ENCODE measurements at regions of chr2 and their contacts with region 1.

Region 1: GRCh38 chr2:221573430-221574230 is 1.5 kb upstream of the EPHA4 start:
- DNase-seq: no peak
- ATAC-seq: peak; percentile 74
- H3K4me3 ChIP-seq: peak overlapping the region; percentile 82
- H3K27ac ChIP-seq: no peak overlapping the region
- H3K4me1 ChIP-seq: peaks cover 14% of the 10 kb centered on the region
- H3K27me3 ChIP-seq: peaks cover 0 to 16% of the 10 kb centered on the region in 2 experiments; a peak in 3 of 4 replicates
- CTCF ChIP-seq: peak; percentile 88 to 97 (median 93); a peak in 5 of 6 replicates
- EP300 ChIP-seq: no peak
- POLR2A ChIP-seq: no peak
- RAD21 ChIP-seq: peak; percentile 91

Region 2: DNA sequence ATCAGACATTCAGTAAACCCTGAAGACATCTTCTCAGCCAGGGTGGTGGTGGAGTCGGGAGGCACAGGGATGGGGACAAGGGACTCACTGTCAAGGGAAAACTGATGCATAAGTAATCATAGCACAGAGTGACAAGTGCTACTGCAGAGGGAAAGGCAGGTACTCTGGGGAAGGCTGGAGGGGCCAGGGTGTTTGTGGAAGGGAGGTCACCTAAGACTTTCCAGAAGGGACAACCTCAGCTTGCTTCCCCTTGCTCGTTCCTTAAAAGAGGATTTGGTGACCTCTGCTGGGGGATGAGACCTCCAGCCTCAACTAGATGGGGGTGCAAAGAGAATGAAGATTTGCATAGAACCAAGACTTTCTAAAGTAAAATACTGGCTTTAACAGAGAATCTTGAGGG is 1846.7 kb before region 1 on chr2:
- CTCF ChIA-PET with region 1: no interaction called
- POLR2A ChIA-PET with region 1: no interaction called
- RAD21 ChIA-PET with region 1: no interaction called
- SMC1A ChIA-PET with region 1: no interaction called
- in situ Hi-C with region 1: loop called (anchors 10 kb)
- intact Hi-C with region 1: no loop called
- DNase-seq: no peak
- ATAC-seq: no peak
- H3K4me3 ChIP-seq: no peak overlapping the region
- H3K27ac ChIP-seq: no peak overlapping the region
- H3K4me1 ChIP-seq: no peaks in the 10 kb centered on the region
- H3K27me3 ChIP-seq: 0 out of 4 replicates have a peak, but pooled peaks cover 0 to 3% of the 10 kb centered on the region in 2 experiments
- CTCF ChIP-seq: no peak
- EP300 ChIP-seq: no peak
- POLR2A ChIP-seq: no peak
- RAD21 ChIP-seq: no peak

Region 3: DNA sequence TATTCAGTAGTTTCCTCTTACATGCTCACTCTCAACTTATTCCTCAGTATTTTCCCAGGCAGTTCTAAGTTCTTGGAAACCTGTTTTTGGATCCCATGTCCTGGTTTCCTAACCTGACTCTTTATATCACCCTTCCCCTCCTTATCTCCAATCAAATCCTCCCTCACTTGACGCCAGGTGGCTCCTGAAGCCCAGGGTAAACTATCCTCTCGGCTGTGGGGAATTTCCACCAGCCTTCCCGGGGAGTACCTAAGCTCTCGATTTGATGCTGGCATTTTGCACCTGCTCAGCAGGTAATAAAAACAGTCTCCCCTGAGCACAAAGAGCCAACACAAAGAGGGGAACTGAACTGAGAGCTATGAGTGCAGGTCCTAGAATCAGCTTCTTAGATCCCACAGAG is 1408.2 kb before region 1 on chr2:
- CTCF ChIA-PET with region 1: no interaction called
- POLR2A ChIA-PET with region 1: no interaction called
- RAD21 ChIA-PET with region 1: interaction called, 3 read pairs
- SMC1A ChIA-PET with region 1: no interaction called
- in situ Hi-C with region 1: no loop called
- intact Hi-C with region 1: loop called (anchors 10 kb)
- DNase-seq: no peak
- ATAC-seq: peak; percentile 33; the same call in 1 of the 3 replicates
- H3K4me3 ChIP-seq: no peak overlapping the region
- H3K27ac ChIP-seq: no peak overlapping the region
- H3K4me1 ChIP-seq: no peaks in the 10 kb centered on the region
- H3K27me3 ChIP-seq: no peaks in the 10 kb centered on the region
- CTCF ChIP-seq: peak in 1 of 3 experiments; percentile 25; a peak in 1 of 6 replicates
- EP300 ChIP-seq: no peak
- POLR2A ChIP-seq: no peak
- RAD21 ChIP-seq: peak; percentile 44

Region 4: DNA sequence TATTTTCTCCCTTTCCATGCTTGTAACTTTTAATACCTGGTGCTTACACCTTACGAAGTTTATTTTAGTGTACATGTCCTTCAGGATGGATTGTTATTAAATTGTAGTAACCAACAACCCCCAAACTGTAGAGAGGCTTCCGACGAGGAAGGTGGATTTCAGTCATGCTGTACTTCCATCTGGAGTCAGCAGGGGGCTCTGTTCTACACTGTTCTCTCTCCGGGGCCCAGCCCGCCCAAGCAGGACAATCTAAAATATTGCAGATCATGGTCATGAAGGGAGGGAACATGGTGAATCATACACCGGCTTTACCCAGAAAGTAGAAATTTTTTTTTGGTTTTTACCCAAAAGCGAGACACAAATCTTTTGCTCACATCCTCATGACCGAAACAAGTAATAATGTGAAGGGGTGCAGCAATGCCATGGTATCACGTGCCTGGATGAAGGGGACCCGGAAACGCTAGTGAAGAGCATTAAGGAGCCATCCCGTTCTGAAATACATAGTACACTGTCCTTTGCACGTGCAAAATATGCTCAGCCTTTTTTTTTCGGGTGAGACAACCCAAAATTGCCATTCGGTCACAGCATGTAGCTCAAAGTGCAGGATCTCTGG is 886.3 kb before region 1 on chr2:
- CTCF ChIA-PET with region 1: interaction called, 8 read pairs
- POLR2A ChIA-PET with region 1: no interaction called
- RAD21 ChIA-PET with region 1: interaction called, 5 read pairs
- SMC1A ChIA-PET with region 1: interaction called, 5 read pairs
- in situ Hi-C with region 1: loop called (anchors 5 kb)
- intact Hi-C with region 1: loop called (anchors 1 kb)
- DNase-seq: no peak
- ATAC-seq: peak; percentile 85
- H3K4me3 ChIP-seq: no peak overlapping the region
- H3K27ac ChIP-seq: no peak overlapping the region
- H3K4me1 ChIP-seq: no peaks in the 10 kb centered on the region
- H3K27me3 ChIP-seq: no peaks in the 10 kb centered on the region
- CTCF ChIP-seq: peak; percentile 78 to 80 (median 78)
- EP300 ChIP-seq: no peak
- POLR2A ChIP-seq: no peak
- RAD21 ChIP-seq: peak; percentile 73

Region 5: DNA sequence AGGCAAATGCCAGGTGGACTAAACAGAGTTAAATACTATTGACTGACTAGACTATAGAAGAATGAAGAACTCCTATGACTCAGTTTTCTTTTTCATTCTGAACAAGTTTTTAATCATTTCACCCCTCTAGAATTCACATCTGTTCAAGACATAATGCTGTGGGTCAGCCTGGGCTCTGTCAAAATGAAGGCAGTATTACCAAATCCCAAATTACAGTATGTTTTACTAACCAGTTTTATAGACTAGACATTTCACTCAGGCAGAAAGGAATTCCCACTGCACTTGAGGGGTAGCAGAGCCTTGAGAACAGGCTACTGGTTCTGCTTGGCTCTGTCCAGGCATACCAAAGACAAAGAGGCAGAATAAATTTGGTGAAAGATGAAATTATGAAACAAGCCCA is 513.3 kb before region 1 on chr2:
- CTCF ChIA-PET with region 1: no interaction called
- POLR2A ChIA-PET with region 1: no interaction called
- RAD21 ChIA-PET with region 1: no interaction called
- SMC1A ChIA-PET with region 1: no interaction called
- in situ Hi-C with region 1: no loop called
- intact Hi-C with region 1: loop called (anchors 10 kb)
- DNase-seq: no peak
- ATAC-seq: no peak
- H3K4me3 ChIP-seq: no peak overlapping the region
- H3K27ac ChIP-seq: no peak overlapping the region
- H3K4me1 ChIP-seq: no peaks in the 10 kb centered on the region; the same call in 1 of the 2 replicates
- H3K27me3 ChIP-seq: no peaks in the 10 kb centered on the region
- CTCF ChIP-seq: no peak
- EP300 ChIP-seq: no peak
- POLR2A ChIP-seq: no peak
- RAD21 ChIP-seq: no peak

Region 6: GRCh38 chr2:221304916-221305315 is 268.7 kb before region 1 on chr2:
- CTCF ChIA-PET with region 1: interaction called, 6 read pairs
- POLR2A ChIA-PET with region 1: no interaction called
- RAD21 ChIA-PET with region 1: no interaction called
- SMC1A ChIA-PET with region 1: no interaction called
- in situ Hi-C with region 1: no loop called
- intact Hi-C with region 1: loop called (anchors 2 kb)
- DNase-seq: no peak
- ATAC-seq: no peak; the same call in 2 of the 3 replicates
- H3K4me3 ChIP-seq: no peak overlapping the region
- H3K27ac ChIP-seq: no peak overlapping the region
- H3K4me1 ChIP-seq: no peaks in the 10 kb centered on the region
- H3K27me3 ChIP-seq: no peaks in the 10 kb centered on the region; a peak in 1 of 4 replicates
- CTCF ChIP-seq: no peak
- EP300 ChIP-seq: no peak
- POLR2A ChIP-seq: no peak
- RAD21 ChIP-seq: no peak

Region 7: GRCh38 chr2:221969087-221969829 is 395.6 kb after region 1 on chr2:
- CTCF ChIA-PET with region 1: no interaction called
- POLR2A ChIA-PET with region 1: no interaction called
- RAD21 ChIA-PET with region 1: no interaction called
- SMC1A ChIA-PET with region 1: no interaction called
- in situ Hi-C with region 1: no loop called
- intact Hi-C with region 1: loop called (anchors 5 kb)
- DNase-seq: no peak
- ATAC-seq: peak; percentile 76
- H3K4me3 ChIP-seq: no peak overlapping the region
- H3K27ac ChIP-seq: no peak overlapping the region
- H3K4me1 ChIP-seq: no peaks in the 10 kb centered on the region
- H3K27me3 ChIP-seq: no peaks in the 10 kb centered on the region
- CTCF ChIP-seq: peak; percentile 54 to 65 (median 54)
- EP300 ChIP-seq: no peak
- POLR2A ChIP-seq: no peak
- RAD21 ChIP-seq: peak; percentile 73